MCF 10A (cell line): ENCODE measurements at regions of chr1 and their contacts with region 1.

Region 1: GRCh38 chr1:201184307-201185122 is 6.1 kb upstream of the IGFN1 start:
- DNase-seq: peak; percentile 90
- H3K4me3 Mint-ChIP-seq: no peak overlapping the region
- H3K27ac Mint-ChIP-seq: no peak overlapping the region
- H3K4me1 Mint-ChIP-seq: peaks cover 6% of the 10 kb centered on the region
- H3K27me3 Mint-ChIP-seq: peaks cover 22% of the 10 kb centered on the region
- CTCF ChIP-seq: peak; percentile 94

Region 2: GRCh38 chr1:201085916-201086735 is 98.4 kb before region 1 on chr1:
- CTCF ChIA-PET with region 1: interaction called, 9 read pairs
- POLR2A ChIA-PET with region 1: no interaction called
- intact Hi-C with region 1: loop called (anchors 1 kb)
- DNase-seq: peak; percentile 82
- H3K4me3 Mint-ChIP-seq: no peak overlapping the region
- H3K27ac Mint-ChIP-seq: no peak overlapping the region
- H3K4me1 Mint-ChIP-seq: peaks cover 7% of the 10 kb centered on the region
- H3K27me3 Mint-ChIP-seq: peaks cover 31% of the 10 kb centered on the region
- CTCF ChIP-seq: peak; percentile 95

Region 3: DNA sequence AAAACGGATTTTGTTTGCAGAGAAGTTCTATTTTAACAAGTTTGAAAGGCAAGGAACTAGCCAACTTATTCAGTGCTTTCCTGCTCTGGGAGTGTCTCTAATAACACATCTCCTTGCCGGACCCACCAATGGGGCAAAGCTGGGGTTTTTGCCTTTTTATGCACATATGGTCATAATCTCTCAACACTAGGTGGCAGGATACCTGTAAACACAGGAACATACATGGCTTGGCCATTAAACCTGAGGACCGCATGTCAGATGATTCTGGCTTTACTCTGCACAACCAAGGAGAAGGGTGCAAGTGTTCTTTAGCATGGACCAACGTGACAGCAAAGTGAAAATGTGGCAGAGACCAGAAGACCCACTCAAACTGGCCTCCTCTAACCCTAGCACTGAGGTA is 35.1 kb before region 1 on chr1:
- CTCF ChIA-PET with region 1: interaction called, 109 read pairs
- POLR2A ChIA-PET with region 1: interaction called, 4 read pairs
- intact Hi-C with region 1: loop called (anchors 1 kb)
- DNase-seq: peak; percentile 80
- H3K4me3 Mint-ChIP-seq: no peak overlapping the region
- H3K27ac Mint-ChIP-seq: no peak overlapping the region
- H3K4me1 Mint-ChIP-seq: peaks cover 5% of the 10 kb centered on the region
- H3K27me3 Mint-ChIP-seq: no peaks in the 10 kb centered on the region
- CTCF ChIP-seq: peak; percentile 78

Region 4: DNA sequence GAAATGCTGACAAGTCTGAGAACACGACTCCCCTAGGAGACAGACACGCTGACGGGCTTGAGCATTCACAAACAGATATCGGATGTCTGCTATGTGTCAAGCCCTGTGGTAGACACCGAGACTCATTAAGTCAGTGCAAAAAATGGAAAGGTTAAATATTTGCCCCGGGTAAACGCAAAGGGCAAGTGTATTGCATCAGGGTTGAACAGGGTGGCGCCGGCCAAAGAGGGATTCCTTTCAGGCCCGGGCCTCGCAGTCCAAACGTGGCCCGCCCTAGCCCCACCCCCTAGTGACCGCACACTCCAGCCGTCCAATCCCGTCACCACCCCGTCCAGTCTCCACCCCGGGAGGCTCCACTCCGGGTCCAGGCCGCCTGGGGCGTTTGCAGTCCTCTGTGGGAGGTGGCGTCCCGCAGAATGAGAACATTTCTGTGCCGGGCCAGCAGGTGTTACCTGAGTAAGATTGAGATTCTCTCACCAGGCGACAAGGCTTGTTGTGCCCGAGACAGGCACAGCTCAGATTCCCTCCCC is 13.9 kb before region 1 on chr1:
- CTCF ChIA-PET with region 1: interaction called, 36 read pairs
- POLR2A ChIA-PET with region 1: interaction called, 6 read pairs
- intact Hi-C with region 1: no loop called
- DNase-seq: peak; percentile 99
- H3K4me3 Mint-ChIP-seq: peak overlapping the region; percentile 73
- H3K27ac Mint-ChIP-seq: peak overlapping the region; percentile 75
- H3K4me1 Mint-ChIP-seq: peaks cover 20% of the 10 kb centered on the region
- H3K27me3 Mint-ChIP-seq: no peaks in the 10 kb centered on the region
- CTCF ChIP-seq: no peak

Region 5: DNA sequence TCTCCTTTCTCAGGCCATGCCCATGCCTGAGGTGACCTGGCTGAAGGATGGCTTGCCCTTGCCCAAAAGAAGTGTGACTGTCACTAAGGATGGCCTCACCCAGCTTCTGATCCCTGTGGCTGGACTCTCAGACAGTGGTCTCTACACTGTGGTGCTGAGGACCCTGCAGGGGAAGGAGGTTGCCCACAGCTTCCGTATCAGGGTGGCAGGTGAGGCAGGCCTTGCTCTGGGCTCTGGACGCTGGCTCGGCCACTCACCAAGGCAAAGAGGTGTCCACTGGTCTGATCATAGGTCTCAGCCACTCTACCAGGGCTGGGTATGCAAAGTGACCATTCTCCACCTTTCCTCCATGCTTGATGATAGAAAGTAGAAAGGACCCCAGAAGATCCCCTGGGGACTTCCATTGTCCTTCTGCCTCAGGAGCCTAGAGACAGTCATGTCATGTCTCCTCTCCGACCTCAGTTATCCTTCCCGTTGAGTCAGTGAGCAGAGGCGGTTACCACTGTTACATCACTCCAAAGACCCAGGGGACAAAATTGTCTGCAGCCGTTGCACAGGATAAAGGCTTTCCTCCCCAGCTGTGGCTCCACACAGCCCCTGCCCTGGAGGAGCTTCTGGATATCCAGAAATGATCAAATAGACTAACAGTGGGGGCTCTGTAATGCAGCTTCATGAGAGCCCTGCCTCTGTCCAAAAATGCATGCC is 40.3 kb after region 1 on chr1:
- CTCF ChIA-PET with region 1: interaction called, 10 read pairs
- POLR2A ChIA-PET with region 1: no interaction called
- intact Hi-C with region 1: loop called (anchors 2 kb)
- DNase-seq: no peak
- H3K4me3 Mint-ChIP-seq: no peak overlapping the region
- H3K27ac Mint-ChIP-seq: no peak overlapping the region
- H3K4me1 Mint-ChIP-seq: peaks cover 1% of the 10 kb centered on the region
- H3K27me3 Mint-ChIP-seq: no peaks in the 10 kb centered on the region
- CTCF ChIP-seq: no peak